B cell (primary cell): ENCODE measurements at regions of chr2 and their contacts with region 1.

Region 1: DNA sequence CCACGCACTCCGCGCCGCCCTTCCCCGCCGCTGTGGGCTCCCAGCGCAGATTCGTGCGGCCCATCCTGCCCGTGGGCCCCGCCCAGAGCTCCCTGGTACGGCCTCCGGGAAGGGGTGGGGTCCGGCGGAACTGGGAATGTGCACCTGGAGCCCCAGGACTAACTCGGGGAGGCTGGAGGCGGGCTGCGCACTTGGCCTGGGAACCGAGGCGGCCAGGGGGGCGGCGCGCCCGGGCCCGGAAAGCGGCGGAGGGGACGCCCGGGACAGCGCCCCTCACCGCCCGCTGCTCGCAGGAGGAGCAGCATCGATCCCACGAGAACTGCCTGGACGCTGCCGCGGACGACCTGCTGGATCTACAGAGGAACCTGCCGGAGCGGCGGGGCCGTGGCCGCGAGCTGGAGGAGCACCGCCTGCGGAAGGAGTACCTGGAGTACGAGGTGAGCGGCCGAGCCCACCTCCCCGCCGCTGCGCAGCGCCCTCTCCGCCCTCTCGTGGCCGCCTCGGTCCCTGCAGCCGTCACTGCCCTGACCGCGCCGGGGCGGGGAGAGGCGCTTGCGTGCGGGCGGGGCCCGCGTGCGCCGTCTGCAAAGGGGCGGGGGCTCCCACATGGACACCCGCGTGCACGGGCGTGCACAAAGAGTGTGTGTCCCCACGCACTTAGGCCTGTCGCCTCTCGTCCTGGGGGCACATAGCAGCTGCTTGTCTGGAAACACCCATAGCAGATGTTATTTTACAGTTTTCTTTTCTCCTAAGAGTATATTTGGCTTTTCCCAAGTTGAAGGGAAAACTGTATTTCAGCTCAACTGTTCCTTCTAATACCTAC is 25.2 kb downstream of the PSD4 start:
- DNase-seq: peak; percentile 86
- ATAC-seq: peak; percentile 90
- H3K4me3 ChIP-seq: peak overlapping the region in 4 of 5 experiments; percentile 11 to 47 (median 32)
- H3K4me3 Mint-ChIP-seq: peak overlapping the region; percentile 80
- H3K27ac ChIP-seq: peak overlapping the region in 1 of 2 donors; percentile 54
- H3K27ac Mint-ChIP-seq: peak overlapping the region; percentile 50
- H3K4me1 ChIP-seq: peaks cover 8 to 14% of the 10 kb centered on the region in 2 donors
- H3K4me1 Mint-ChIP-seq: peaks cover 9% of the 10 kb centered on the region
- H3K27me3 ChIP-seq: no peaks in the 10 kb centered on the region
- H3K27me3 Mint-ChIP-seq: no peaks in the 10 kb centered on the region
- CTCF ChIP-seq: peak; percentile 98

Region 2: GRCh38 chr2:113050921-113051895 is 147.8 kb before region 1 on chr2:
- CTCF ChIA-PET with region 1: no interaction called
- POLR2A ChIA-PET with region 1: no interaction called
- intact Hi-C with region 1: no loop called
- DNase-seq: no peak
- ATAC-seq: no peak
- H3K4me3 ChIP-seq: no peak overlapping the region
- H3K4me3 Mint-ChIP-seq: no peak overlapping the region
- H3K27ac ChIP-seq: no peak overlapping the region
- H3K27ac Mint-ChIP-seq: no peak overlapping the region
- H3K4me1 ChIP-seq: no peaks in the 10 kb centered on the region
- H3K4me1 Mint-ChIP-seq: no peaks in the 10 kb centered on the region
- H3K27me3 ChIP-seq: peaks cover 0 to 9% (median 5%) of the 10 kb centered on the region in 4 experiments
- H3K27me3 Mint-ChIP-seq: peaks cover 41% of the 10 kb centered on the region
- CTCF ChIP-seq: no peak

Region 3: GRCh38 chr2:113080134-113080533 is 118.9 kb before region 1 on chr2:
- CTCF ChIA-PET with region 1: interaction called, 18 read pairs
- POLR2A ChIA-PET with region 1: interaction called, 3 read pairs
- intact Hi-C with region 1: loop called (anchors 1 kb)
- DNase-seq: peak; percentile 59
- ATAC-seq: peak; percentile 51
- H3K4me3 ChIP-seq: no peak overlapping the region
- H3K4me3 Mint-ChIP-seq: no peak overlapping the region
- H3K27ac ChIP-seq: no peak overlapping the region
- H3K27ac Mint-ChIP-seq: no peak overlapping the region
- H3K4me1 ChIP-seq: no peaks in the 10 kb centered on the region
- H3K4me1 Mint-ChIP-seq: peaks cover 2% of the 10 kb centered on the region
- H3K27me3 ChIP-seq: peaks cover 0 to 14% (median 6%) of the 10 kb centered on the region in 4 experiments
- H3K27me3 Mint-ChIP-seq: peaks cover 39% of the 10 kb centered on the region
- CTCF ChIP-seq: peak; percentile 80

Region 4: GRCh38 chr2:113148606-113149560 is 50.1 kb before region 1 on chr2:
- CTCF ChIA-PET with region 1: interaction called, 590 read pairs
- POLR2A ChIA-PET with region 1: no interaction called
- intact Hi-C with region 1: no loop called
- DNase-seq: peak; percentile 62
- ATAC-seq: peak; percentile 70
- H3K4me3 ChIP-seq: no peak overlapping the region
- H3K4me3 Mint-ChIP-seq: peak overlapping the region; percentile 48
- H3K27ac ChIP-seq: peak overlapping the region; percentile 52 to 89
- H3K27ac Mint-ChIP-seq: peak overlapping the region; percentile 91
- H3K4me1 ChIP-seq: peaks cover 20 to 24% of the 10 kb centered on the region in 2 donors
- H3K4me1 Mint-ChIP-seq: peaks cover 26% of the 10 kb centered on the region
- H3K27me3 ChIP-seq: no peaks in the 10 kb centered on the region
- H3K27me3 Mint-ChIP-seq: no peaks in the 10 kb centered on the region
- CTCF ChIP-seq: no peak

Region 5: DNA sequence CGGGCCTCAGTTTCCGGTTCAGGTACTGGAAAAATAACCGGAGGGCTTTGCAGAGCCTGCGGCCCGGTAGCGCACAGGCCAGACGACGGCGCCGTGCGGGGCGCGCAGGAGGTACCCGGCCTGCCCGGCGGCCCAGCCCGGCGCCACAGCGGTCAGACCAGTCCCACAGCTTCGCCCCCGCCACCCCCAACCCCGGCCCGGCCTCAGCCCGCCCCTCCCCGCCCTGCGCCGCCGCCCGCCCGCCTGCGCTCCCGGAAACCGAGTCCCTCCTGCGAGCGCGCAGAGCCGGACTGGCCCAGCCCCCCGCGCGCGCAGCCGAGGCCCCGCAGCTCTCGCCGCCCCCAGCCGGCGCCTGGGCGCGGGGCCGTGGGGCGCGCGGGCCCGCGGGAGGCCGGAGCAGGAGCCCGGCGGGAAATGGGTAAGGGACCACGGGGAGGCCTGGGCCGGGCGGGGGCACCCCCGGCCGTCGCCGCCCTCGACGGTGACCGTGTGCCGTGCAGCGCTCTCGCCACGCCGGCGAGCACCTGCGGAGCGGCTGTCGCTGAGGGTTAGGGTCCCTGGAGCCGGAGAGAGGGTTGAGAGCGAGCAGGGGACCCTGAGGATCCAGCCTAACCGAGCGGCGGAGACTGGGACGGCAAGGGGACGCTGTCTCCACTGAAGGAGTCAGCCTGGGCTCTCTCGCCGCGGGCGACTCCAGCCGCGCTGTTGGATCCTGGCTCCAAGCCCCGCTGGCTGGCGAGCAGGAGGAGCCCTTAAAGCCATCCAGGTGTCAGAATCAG is 41.7 kb before region 1 on chr2:
- CTCF ChIA-PET with region 1: interaction called, 40 read pairs
- POLR2A ChIA-PET with region 1: no interaction called
- intact Hi-C with region 1: loop called (anchors 1 kb)
- DNase-seq: peak; percentile 49
- ATAC-seq: peak; percentile 88
- H3K4me3 ChIP-seq: peak overlapping the region; percentile 21 to 71 (median 62)
- H3K4me3 Mint-ChIP-seq: peak overlapping the region; percentile 89
- H3K27ac ChIP-seq: peak overlapping the region; percentile 11 to 59
- H3K27ac Mint-ChIP-seq: peak overlapping the region; percentile 56
- H3K4me1 ChIP-seq: peaks cover 17 to 23% of the 10 kb centered on the region in 2 donors
- H3K4me1 Mint-ChIP-seq: peaks cover 16% of the 10 kb centered on the region
- H3K27me3 ChIP-seq: peaks cover 0 to 2% (median 0%) of the 10 kb centered on the region in 4 experiments
- H3K27me3 Mint-ChIP-seq: no peaks in the 10 kb centered on the region
- CTCF ChIP-seq: no peak

Region 6: DNA sequence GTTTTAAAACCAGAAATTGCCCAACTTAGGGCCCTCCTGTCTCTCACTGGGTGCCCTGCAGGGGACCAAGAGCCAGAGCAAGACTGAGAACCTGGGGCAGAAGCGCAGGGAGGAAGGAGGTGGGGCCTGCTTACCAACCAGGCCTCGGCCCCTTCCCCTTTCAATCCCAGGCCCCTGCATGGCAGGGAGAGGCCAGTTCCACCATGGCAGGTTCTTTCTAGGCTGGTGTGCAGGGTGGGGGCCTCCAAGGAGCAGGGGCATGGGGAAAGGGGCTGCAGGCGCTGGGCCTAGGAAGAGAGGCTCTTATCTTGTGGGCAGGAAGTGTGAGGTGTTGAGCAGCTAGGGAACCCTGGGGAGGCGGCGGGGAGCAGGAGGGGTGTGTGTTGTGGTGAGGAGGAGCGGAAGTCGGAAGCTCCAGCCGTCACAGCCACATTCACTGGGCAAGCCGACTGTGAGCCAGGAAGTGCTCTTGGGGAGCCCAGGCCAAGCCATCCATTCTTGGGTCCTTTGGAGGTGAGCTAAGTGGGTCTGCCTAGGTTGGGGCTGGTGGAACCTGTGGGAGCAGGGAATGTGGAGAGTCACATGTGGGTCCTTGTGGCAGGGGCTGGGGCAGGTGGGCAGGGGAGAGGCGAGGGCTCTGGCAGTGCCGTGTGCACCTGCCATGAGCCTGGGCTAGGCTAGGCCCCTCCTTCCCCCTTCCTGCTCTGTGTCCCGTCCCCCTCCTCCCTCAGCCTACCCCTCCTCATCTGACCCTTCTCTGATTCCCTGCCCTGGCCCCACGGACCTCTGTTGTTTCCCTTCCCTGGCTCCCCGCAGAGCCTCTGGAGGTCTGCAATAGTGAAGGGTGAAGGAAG is 25.2 kb before region 1 on chr2 and contains the start of gene PSD4:
- CTCF ChIA-PET with region 1: interaction called, 257 read pairs
- POLR2A ChIA-PET with region 1: interaction called, 14 read pairs
- intact Hi-C with region 1: loop called (anchors 1 kb)
- DNase-seq: peak; percentile 83
- ATAC-seq: peak; percentile 73
- H3K4me3 ChIP-seq: peak within 1 kb of the TSS; percentile 58 to 95 (median 77)
- H3K4me3 Mint-ChIP-seq: peak within 1 kb of the TSS; percentile 91
- H3K27ac ChIP-seq: peak within 1 kb of the TSS; percentile 87 to 91
- H3K27ac Mint-ChIP-seq: peak within 1 kb of the TSS; percentile 92
- H3K4me1 ChIP-seq: peaks cover 69 to 90% of the 10 kb centered on the region in 2 donors
- H3K4me1 Mint-ChIP-seq: peaks cover 86% of the 10 kb centered on the region
- H3K27me3 ChIP-seq: no peaks in the 10 kb centered on the region
- H3K27me3 Mint-ChIP-seq: no peaks in the 10 kb centered on the region
- CTCF ChIP-seq: no peak
- total RNA-seq, gene PSD4: 203 and 217 TPM in 2 replicates